ENCODE measurements at regions of chr11 and their contacts with region 1.

Region 1: GRCh38 chr11:118295834-118296454 is 8.6 kb upstream of the CD3E start:
- DNase-seq: peak; percentile 68
- H3K4me3 Mint-ChIP-seq: no peak overlapping the region
- H3K27ac Mint-ChIP-seq: no peak overlapping the region
- H3K4me1 Mint-ChIP-seq: peaks cover 12% of the 10 kb centered on the region
- H3K27me3 Mint-ChIP-seq: no peaks in the 10 kb centered on the region
- CTCF ChIP-seq: peak; percentile 36

Region 2: GRCh38 chr11:118322721-118323120 is 26.8 kb after region 1 on chr11:
- CTCF ChIA-PET with region 1: interaction called, 10 read pairs
- POLR2A ChIA-PET with region 1: interaction called, 3 read pairs
- intact Hi-C with region 1: no loop called
- DNase-seq: no peak
- H3K4me3 Mint-ChIP-seq: no peak overlapping the region
- H3K27ac Mint-ChIP-seq: no peak overlapping the region
- H3K4me1 Mint-ChIP-seq: no peaks in the 10 kb centered on the region
- H3K27me3 Mint-ChIP-seq: peaks cover 4% of the 10 kb centered on the region
- CTCF ChIP-seq: no peak

Region 3: GRCh38 chr11:118353084-118353710 is 57.3 kb after region 1 on chr11:
- CTCF ChIA-PET with region 1: interaction called, 36 read pairs
- POLR2A ChIA-PET with region 1: interaction called, 5 read pairs
- intact Hi-C with region 1: loop called (anchors 1 kb)
- DNase-seq: peak; percentile 43
- H3K4me3 Mint-ChIP-seq: no peak overlapping the region
- H3K27ac Mint-ChIP-seq: no peak overlapping the region
- H3K4me1 Mint-ChIP-seq: no peaks in the 10 kb centered on the region
- H3K27me3 Mint-ChIP-seq: peaks cover 32% of the 10 kb centered on the region
- CTCF ChIP-seq: peak; percentile 51

Region 4: DNA sequence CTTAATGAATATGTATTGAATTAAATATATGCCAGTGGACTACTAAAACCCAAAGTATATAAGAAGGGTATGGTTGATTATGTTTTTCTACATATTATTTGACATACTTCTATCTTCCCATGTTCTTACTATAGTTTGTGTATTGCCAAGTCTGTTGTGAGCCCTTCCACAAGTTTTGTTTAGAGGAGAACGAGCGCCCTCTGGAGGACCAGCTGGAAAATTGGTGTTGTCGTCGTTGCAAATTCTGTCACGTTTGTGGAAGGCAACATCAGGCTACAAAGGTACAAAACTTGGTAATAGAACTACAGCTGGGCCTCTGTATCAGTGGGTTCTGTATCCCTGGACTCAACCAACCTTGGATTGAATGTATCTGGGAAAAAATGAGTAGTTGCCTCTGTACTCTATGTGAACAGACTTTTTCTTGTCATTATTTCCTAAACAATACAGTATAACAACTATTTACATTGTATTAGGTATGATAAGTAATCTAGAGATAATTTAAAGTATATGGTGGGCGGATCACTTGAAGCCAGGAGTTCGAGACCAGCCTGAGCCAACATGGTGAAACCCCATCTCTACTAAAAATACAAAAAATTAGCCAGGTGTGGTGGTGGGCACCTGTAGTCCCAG is 192.7 kb after region 1 on chr11:
- CTCF ChIA-PET with region 1: interaction called, 3 read pairs
- POLR2A ChIA-PET with region 1: no interaction called
- intact Hi-C with region 1: loop called (anchors 5 kb)
- DNase-seq: peak; percentile 78
- H3K4me3 Mint-ChIP-seq: no peak overlapping the region
- H3K27ac Mint-ChIP-seq: no peak overlapping the region
- H3K4me1 Mint-ChIP-seq: no peaks in the 10 kb centered on the region
- H3K27me3 Mint-ChIP-seq: no peaks in the 10 kb centered on the region
- CTCF ChIP-seq: peak; percentile 74

Region 5: GRCh38 chr11:118565051-118565450 is 269.1 kb after region 1 on chr11:
- CTCF ChIA-PET with region 1: no interaction called
- POLR2A ChIA-PET with region 1: no interaction called
- intact Hi-C with region 1: loop called (anchors 5 kb)
- DNase-seq: no peak
- H3K4me3 Mint-ChIP-seq: peak overlapping the region; percentile 91
- H3K27ac Mint-ChIP-seq: peak overlapping the region; percentile 96
- H3K4me1 Mint-ChIP-seq: peaks cover 5% of the 10 kb centered on the region
- H3K27me3 Mint-ChIP-seq: no peaks in the 10 kb centered on the region
- CTCF ChIP-seq: no peak